Activated naive CD4-positive, alpha-beta T cell treated with anti-CD3 and anti-CD28 coated beads for 36 hours (primary cell): ENCODE measurements at regions of chr5 and their contacts with region 1.

Region 1: GRCh38 chr5:159987031-159987674 is 21.8 kb upstream of the TTC1 start:
- DNase-seq: peak; percentile 83
- H3K4me3 Mint-ChIP-seq: peak overlapping the region; percentile 56
- H3K27ac Mint-ChIP-seq: no peak overlapping the region
- H3K4me1 Mint-ChIP-seq: no peaks in the 10 kb centered on the region
- H3K27me3 Mint-ChIP-seq: peaks cover 20% of the 10 kb centered on the region

Region 2: GRCh38 chr5:159773062-159773924 is 213.9 kb before region 1 on chr5:
- CTCF ChIA-PET with region 1: no interaction called
- intact Hi-C with region 1: loop called (anchors 1 kb)
- DNase-seq: peak; percentile 86
- H3K4me3 Mint-ChIP-seq: peak overlapping the region; percentile 41
- H3K27ac Mint-ChIP-seq: no peak overlapping the region
- H3K4me1 Mint-ChIP-seq: peaks cover 8% of the 10 kb centered on the region
- H3K27me3 Mint-ChIP-seq: peaks cover 32% of the 10 kb centered on the region

Region 3: GRCh38 chr5:159944056-159944455 is 43.1 kb before region 1 on chr5:
- CTCF ChIA-PET with region 1: no interaction called
- intact Hi-C with region 1: no loop called
- DNase-seq: no peak
- H3K4me3 Mint-ChIP-seq: no peak overlapping the region
- H3K27ac Mint-ChIP-seq: no peak overlapping the region
- H3K4me1 Mint-ChIP-seq: no peaks in the 10 kb centered on the region
- H3K27me3 Mint-ChIP-seq: peaks cover 13% of the 10 kb centered on the region